Activated naive CD4-positive, alpha-beta T cell treated with anti-CD3 and anti-CD28 coated beads for 36 hours (primary cell): ENCODE measurements at regions of chr4 and their contacts with region 1.

Region 1: GRCh38 chr4:140851032-140851636 is 94.9 kb upstream of the TBC1D9 start:
- DNase-seq: peak; percentile 54
- H3K4me3 Mint-ChIP-seq: no peak overlapping the region
- H3K27ac Mint-ChIP-seq: no peak overlapping the region
- H3K4me1 Mint-ChIP-seq: no peaks in the 10 kb centered on the region
- H3K27me3 Mint-ChIP-seq: peaks cover 21% of the 10 kb centered on the region

Region 2: DNA sequence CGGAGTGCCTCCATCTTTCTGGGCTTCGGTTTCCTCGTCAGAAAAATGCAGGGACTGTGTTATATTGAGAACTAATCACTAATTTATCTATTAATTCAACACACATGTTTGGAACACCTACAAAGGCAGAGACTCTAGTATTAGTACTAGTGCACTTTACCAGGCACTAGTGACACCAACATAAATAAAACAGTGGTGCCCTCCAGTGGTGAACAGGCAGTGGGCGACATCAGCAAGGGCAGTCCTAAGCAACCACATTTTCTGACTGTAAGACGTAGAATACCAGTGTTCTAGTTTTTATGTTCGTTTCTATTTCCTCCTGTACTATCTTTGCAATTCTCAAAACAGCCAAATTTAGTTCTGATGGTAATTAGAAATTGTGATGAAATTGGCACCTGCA is 213.3 kb before region 1 on chr4:
- CTCF ChIA-PET with region 1: interaction called, 3 read pairs
- intact Hi-C with region 1: loop called (anchors 5 kb)
- DNase-seq: peak; percentile 65
- H3K4me3 Mint-ChIP-seq: no peak overlapping the region
- H3K27ac Mint-ChIP-seq: no peak overlapping the region
- H3K4me1 Mint-ChIP-seq: no peaks in the 10 kb centered on the region
- H3K27me3 Mint-ChIP-seq: peaks cover 14% of the 10 kb centered on the region

Region 3: DNA sequence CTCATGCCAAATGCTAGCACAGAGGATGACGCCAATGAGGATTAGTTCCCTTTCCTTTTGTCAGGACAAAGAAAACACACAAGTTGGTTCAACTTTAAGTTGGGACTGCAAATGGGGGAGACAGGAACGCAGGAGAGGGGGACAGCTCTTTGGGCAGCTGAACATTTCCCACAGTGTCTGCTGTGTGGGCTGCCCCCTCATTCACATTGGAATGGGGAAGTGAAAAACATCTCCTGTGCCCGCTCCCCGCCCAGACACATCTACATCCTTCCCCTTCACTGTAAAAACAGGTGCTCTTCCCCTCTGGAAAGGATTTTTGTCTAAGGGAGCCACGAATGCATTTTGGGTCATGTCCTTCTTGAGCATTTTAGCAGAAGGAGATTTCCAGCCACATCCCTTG is 50.5 kb before region 1 on chr4:
- CTCF ChIA-PET with region 1: no interaction called
- intact Hi-C with region 1: no loop called
- DNase-seq: no peak
- H3K4me3 Mint-ChIP-seq: no peak overlapping the region
- H3K27ac Mint-ChIP-seq: no peak overlapping the region
- H3K4me1 Mint-ChIP-seq: no peaks in the 10 kb centered on the region
- H3K27me3 Mint-ChIP-seq: peaks cover 1% of the 10 kb centered on the region